H1 (cell line): ENCODE measurements at regions of chr22 and their contacts with region 1.

Region 1: GRCh38 chr22:38766076-38766777 is 10.4 kb upstream of the SUN2 start:
- DNase-seq: peak; percentile 68 to 89
- H3K4me3 ChIP-seq: no peak overlapping the region
- H3K27ac ChIP-seq: no peak overlapping the region
- H3K4me1 ChIP-seq: peaks cover 0 to 6% (median 1%) of the 10 kb centered on the region in 4 experiments; a peak in 4 of 7 replicates
- H3K27me3 ChIP-seq: no peaks in the 10 kb centered on the region; a peak in 1 of 7 replicates
- CTCF ChIP-seq: peak; percentile 83 to 97 (median 94)
- EP300 ChIP-seq: no peak
- POLR2A ChIP-seq: no peak
- RAD21 ChIP-seq: peak; percentile 54 to 68

Region 2: DNA sequence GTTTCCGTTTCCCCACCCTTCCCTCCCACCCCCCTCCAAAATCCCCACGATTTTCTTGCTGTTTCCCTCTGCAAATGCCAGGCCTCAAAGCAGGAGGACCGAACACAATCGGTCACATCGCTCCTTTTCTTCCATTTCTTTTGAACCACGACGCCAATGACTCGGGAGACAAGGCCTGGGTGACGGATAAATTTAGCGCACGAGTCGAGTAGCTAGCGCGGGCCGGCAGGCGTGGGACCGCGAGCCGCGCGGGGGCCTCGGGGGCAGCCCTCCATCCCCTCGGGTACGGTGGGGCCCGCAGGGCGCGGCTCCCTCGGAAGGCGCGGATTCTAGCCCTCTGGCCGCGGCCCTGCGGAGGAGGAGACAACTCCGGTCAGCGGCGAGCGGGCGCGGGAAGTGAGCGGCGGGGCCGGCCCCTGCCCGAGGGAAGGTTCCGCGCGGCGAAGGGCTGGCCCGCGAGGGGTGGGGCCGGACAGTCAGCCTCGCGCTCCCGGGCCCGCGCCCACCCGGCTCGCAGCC is 65.9 kb before region 1 on chr22:
- CTCF ChIA-PET with region 1: no interaction called
- POLR2A ChIA-PET with region 1: no interaction called
- DNase-seq: no peak
- H3K4me3 ChIP-seq: peak overlapping the region; percentile 74 to 100 (median 88)
- H3K27ac ChIP-seq: peak overlapping the region; percentile 97
- H3K4me1 ChIP-seq: peaks cover 7 to 19% (median 12%) of the 10 kb centered on the region in 4 experiments; a peak in 6 of 7 replicates
- H3K27me3 ChIP-seq: no peaks in the 10 kb centered on the region
- CTCF ChIP-seq: no peak
- EP300 ChIP-seq: no peak
- POLR2A ChIP-seq: no peak
- RAD21 ChIP-seq: no peak

Region 3: DNA sequence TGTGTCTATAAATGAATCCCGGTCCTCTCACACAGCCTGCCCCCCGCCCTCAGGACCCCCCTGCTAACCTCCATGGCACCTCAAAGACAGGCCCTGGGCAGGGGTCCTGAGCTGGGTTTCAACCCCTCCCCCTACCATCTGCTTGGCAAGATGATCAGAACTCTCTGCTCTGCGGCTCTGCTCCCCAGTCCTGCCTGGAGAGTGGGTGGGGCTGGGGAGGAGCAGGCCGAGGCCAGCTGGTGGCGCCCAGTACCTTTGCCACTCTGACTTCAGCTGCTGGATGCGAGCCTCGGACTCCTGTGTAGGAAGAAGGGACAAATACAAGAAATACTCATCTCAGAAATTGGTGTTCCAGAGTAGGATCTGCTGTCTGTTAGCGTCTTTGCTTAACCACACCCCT is 25.5 kb before region 1 on chr22:
- CTCF ChIA-PET with region 1: interaction called, 124 read pairs
- POLR2A ChIA-PET with region 1: interaction called, 12 read pairs
- DNase-seq: no peak
- H3K4me3 ChIP-seq: no peak overlapping the region
- H3K27ac ChIP-seq: no peak overlapping the region
- H3K4me1 ChIP-seq: no peaks in the 10 kb centered on the region
- H3K27me3 ChIP-seq: no peaks in the 10 kb centered on the region
- CTCF ChIP-seq: peak; percentile 5 to 33 (median 21); a peak in 3 of 4 replicates
- EP300 ChIP-seq: no peak
- POLR2A ChIP-seq: no peak
- RAD21 ChIP-seq: peak; percentile 30 to 45

Region 4: DNA sequence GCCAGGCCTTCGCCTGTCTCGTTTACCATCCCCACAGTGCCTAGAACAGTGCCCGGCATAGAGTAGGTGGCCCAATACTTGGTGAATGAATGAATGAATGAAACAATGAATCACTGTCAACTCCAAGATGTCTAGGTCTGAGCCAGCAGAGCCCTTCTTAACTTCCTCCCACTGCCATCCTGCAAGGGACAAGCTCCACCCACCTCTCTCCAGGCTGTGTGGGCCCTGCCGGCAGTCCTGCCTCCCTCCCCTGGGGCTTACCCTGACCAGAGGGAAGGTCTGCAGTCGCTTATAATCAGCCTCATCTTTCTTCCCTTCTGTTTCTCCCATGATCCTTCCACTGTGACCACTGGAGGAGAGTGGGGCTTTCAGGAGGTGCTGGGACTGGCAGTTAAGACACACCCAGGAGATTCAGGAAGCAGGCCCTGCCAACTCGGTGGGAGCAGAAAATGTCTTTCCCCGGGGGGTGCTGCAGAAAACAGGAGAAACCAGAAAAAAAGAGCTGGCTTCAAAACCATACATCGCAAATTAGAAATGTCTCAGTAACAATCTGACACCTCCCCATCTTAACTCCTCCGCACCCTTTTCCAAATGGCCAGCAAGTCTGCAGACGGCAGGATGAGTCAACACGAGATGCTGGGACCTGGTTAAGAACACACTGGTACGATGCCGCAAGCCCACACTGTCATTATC is 16.3 kb after region 1 on chr22:
- CTCF ChIA-PET with region 1: interaction called, 75 read pairs
- POLR2A ChIA-PET with region 1: interaction called, 4 read pairs
- DNase-seq: no peak
- H3K4me3 ChIP-seq: no peak overlapping the region
- H3K27ac ChIP-seq: no peak overlapping the region
- H3K4me1 ChIP-seq: peaks cover 0 to 4% (median 1%) of the 10 kb centered on the region in 4 experiments; a peak in 2 of 7 replicates
- H3K27me3 ChIP-seq: no peaks in the 10 kb centered on the region; a peak in 1 of 7 replicates
- CTCF ChIP-seq: no peak
- EP300 ChIP-seq: no peak
- POLR2A ChIP-seq: no peak
- RAD21 ChIP-seq: no peak

Region 5: DNA sequence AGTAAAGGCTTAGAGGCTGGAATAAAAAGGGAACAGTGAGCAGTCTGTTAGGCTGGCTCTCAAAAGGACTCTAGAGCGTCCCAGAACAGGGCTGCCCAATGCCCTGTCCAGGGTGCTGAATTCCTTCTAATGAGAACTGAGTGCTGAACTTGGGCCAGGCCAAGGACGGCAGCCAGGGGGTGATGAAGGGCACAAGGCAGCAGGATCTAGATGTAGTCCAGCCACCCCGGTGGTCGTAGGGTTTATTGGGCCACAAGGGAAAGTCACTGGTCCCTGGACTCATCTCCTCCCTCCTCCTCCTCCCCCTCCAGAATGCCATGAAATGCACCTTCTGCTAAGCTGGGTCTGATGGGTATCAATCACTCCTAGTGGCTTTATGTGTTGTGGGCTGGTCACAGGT is 58.4 kb after region 1 on chr22:
- CTCF ChIA-PET with region 1: interaction called, 30 read pairs
- POLR2A ChIA-PET with region 1: interaction called, 3 read pairs
- DNase-seq: peak; percentile 61 to 88
- H3K4me3 ChIP-seq: no peak overlapping the region
- H3K27ac ChIP-seq: no peak overlapping the region
- H3K4me1 ChIP-seq: peaks cover 0 to 6% (median 2%) of the 10 kb centered on the region in 4 experiments; a peak in 2 of 7 replicates
- H3K27me3 ChIP-seq: no peaks in the 10 kb centered on the region; a peak in 1 of 7 replicates
- CTCF ChIP-seq: peak; percentile 88 to 96 (median 95)
- EP300 ChIP-seq: no peak
- POLR2A ChIP-seq: no peak
- RAD21 ChIP-seq: peak; percentile 60 to 69

Region 6: GRCh38 chr22:38850941-38851849 is 85.0 kb after region 1 on chr22:
- CTCF ChIA-PET with region 1: interaction called, 23 read pairs
- POLR2A ChIA-PET with region 1: no interaction called
- DNase-seq: no peak
- H3K4me3 ChIP-seq: no peak overlapping the region
- H3K27ac ChIP-seq: no peak overlapping the region
- H3K4me1 ChIP-seq: peaks cover 0 to 3% (median under 1%) of the 10 kb centered on the region in 4 experiments; a peak in 2 of 7 replicates
- H3K27me3 ChIP-seq: peaks cover 0 to 8% (median 2%) of the 10 kb centered on the region in 4 experiments; a peak in 3 of 7 replicates
- CTCF ChIP-seq: no peak
- EP300 ChIP-seq: no peak
- POLR2A ChIP-seq: no peak
- RAD21 ChIP-seq: no peak

Region 7: GRCh38 chr22:38907767-38908166 is 141.5 kb after region 1 on chr22:
- CTCF ChIA-PET with region 1: no interaction called
- POLR2A ChIA-PET with region 1: no interaction called
- DNase-seq: no peak
- H3K4me3 ChIP-seq: no peak overlapping the region
- H3K27ac ChIP-seq: no peak overlapping the region
- H3K4me1 ChIP-seq: no peaks in the 10 kb centered on the region
- H3K27me3 ChIP-seq: no peaks in the 10 kb centered on the region
- CTCF ChIP-seq: no peak
- EP300 ChIP-seq: no peak
- POLR2A ChIP-seq: no peak
- RAD21 ChIP-seq: no peak